Sigmoid colon (tissue), 7 donors: ENCODE measurements at regions of chr10 and their contacts with region 1.

Region 1: GRCh38 chr10:109922976-109923921 is at the start of gene XPNPEP1:
- DNase-seq: peak; percentile 95
- H3K4me3 ChIP-seq: peak within 1 kb of the TSS; percentile 44 to 98 (median 93)
- H3K27ac ChIP-seq: peak within 1 kb of the TSS; percentile 86 to 97 (median 92)
- H3K4me1 ChIP-seq: peaks cover 0 to 28% (median 19%) of the 10 kb centered on the region in 4 donors
- H3K27me3 ChIP-seq: no peaks in the 10 kb centered on the region
- CTCF ChIP-seq: no peak
- EP300 ChIP-seq: no peak
- POLR2A ChIP-seq: peak; percentile 16 to 61
- total RNA-seq, gene XPNPEP1: 53.5 to 59.1 (median 56.5) TPM

Region 2: GRCh38 chr10:109883859-109884771 is 39.1 kb before region 1 on chr10:
- intact Hi-C with region 1: loop called (anchors 5 kb)
- DNase-seq: peak; percentile 89
- H3K4me3 ChIP-seq: peak overlapping the region in 2 of 4 donors; percentile 1 to 10
- H3K27ac ChIP-seq: peak overlapping the region; percentile 23 to 55 (median 52)
- H3K4me1 ChIP-seq: peaks cover 0 to 12% (median 8%) of the 10 kb centered on the region in 4 donors
- H3K27me3 ChIP-seq: no peaks in the 10 kb centered on the region
- CTCF ChIP-seq: peak; percentile 80 to 96 (median 93)
- EP300 ChIP-seq: no peak
- POLR2A ChIP-seq: no peak

Region 3: DNA sequence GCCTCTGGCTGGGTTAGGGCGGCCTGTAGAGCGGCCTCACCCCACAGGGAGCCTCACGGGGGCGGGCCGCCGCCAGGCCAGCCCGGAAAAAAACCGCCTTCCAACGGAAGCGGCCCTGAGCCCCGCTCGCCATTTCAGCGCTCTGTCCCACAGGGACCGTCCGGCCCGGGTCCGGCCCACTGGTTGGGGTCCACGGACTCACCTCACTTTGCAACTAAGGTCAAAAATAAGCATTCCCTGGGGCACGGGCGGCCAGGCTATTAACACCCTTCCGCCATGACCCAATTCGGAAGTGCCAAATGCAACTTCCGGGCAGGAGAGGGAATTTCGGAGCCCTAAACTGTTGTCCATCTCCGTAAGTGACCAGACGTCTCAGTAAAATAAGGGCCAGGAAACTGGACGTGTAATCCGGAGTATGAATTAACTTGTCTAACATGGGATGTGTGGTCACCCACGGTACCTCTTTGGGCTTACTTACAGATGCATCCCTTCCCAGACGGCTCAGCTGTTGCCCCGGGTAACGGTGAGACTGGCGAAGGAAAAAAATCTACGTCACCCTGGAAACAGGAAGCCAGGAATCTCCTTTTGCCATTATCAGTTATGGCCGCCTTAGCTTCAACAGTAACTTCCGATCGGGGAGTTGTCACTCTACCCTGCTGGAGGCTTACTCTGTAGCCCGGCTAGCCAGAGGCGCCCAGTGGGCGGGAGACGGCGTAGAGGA is 995.6 kb after region 1 on chr10 and contains the start of gene BBIP1:
- intact Hi-C with region 1: loop called (anchors 10 kb)
- DNase-seq: no peak
- H3K4me3 ChIP-seq: peak within 1 kb of the TSS; percentile 70 to 91 (median 77)
- H3K27ac ChIP-seq: peak within 1 kb of the TSS; percentile 96 to 98 (median 98)
- H3K4me1 ChIP-seq: peaks cover 0 to 45% (median 37%) of the 10 kb centered on the region in 4 donors
- H3K27me3 ChIP-seq: no peaks in the 10 kb centered on the region
- CTCF ChIP-seq: no peak
- EP300 ChIP-seq: peak in 2 of 4 donors; percentile 5 to 9
- POLR2A ChIP-seq: peak; percentile 23 to 39
- total RNA-seq, gene BBIP1: 19.7 to 36.8 (median 27.5) TPM